ENCODE measurements at regions of chr16 and their contacts with region 1.

Region 1: GRCh38 chr16:72149676-72150464 is 22.1 kb downstream of the PMFBP1 start:
- DNase-seq: no peak
- ATAC-seq: no peak
- H3K4me3 ChIP-seq: no peak overlapping the region
- H3K27ac ChIP-seq: no peak overlapping the region
- H3K4me1 ChIP-seq: no peaks in the 10 kb centered on the region
- H3K27me3 ChIP-seq: no peaks in the 10 kb centered on the region
- CTCF ChIP-seq: peak; percentile 17; the same call in 1 of the 2 replicates

Region 2: DNA sequence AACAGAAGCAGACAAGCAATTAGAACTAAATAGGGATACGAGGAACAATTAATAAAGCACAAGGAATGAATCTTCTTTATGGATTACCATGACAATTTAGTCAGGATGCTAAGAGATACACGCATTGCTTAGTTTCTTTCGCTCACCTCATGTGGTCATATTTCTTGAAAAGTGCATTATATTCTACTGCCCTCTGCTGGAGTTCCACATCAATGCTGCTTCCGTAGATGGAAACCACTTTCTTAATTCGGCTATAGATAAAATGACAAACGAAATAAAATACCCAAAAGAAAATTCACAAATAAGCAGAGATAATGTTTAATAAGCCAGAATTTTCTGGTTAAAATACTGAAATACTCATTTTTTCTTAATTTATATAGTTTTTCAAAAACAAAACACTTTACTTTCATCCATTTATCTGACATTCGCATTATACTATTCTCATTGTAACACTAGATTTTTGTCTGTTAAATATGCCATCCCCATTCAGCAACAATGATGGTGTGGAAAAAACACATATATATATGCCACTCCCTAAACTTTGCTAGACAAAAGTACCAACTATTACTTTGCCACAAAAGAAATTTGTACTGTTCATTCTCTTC is 403.3 kb before region 1 on chr16:
- CTCF ChIA-PET with region 1: no interaction called
- POLR2A ChIA-PET with region 1: interaction called, 10 read pairs
- in situ Hi-C with region 1: no loop called
- intact Hi-C with region 1: no loop called
- DNase-seq: no peak
- ATAC-seq: no peak
- H3K4me3 ChIP-seq: no peak overlapping the region
- H3K27ac ChIP-seq: no peak overlapping the region
- H3K4me1 ChIP-seq: no peaks in the 10 kb centered on the region
- H3K27me3 ChIP-seq: no peaks in the 10 kb centered on the region
- CTCF ChIP-seq: peak; percentile 71; the same call in 1 of the 2 replicates